ENCODE measurements at regions of chr9 and their contacts with region 1.

Region 1: GRCh38 chr9:101791938-101792337 is 53.5 kb upstream of the GRIN3A start:
- DNase-seq: peak; percentile 64
- H3K4me3 Mint-ChIP-seq: no peak overlapping the region
- H3K27ac Mint-ChIP-seq: no peak overlapping the region
- H3K4me1 Mint-ChIP-seq: no peaks in the 10 kb centered on the region
- H3K27me3 Mint-ChIP-seq: peaks cover 23% of the 10 kb centered on the region
- CTCF ChIP-seq: peak; percentile 64

Region 2: GRCh38 chr9:101970609-101971008 is 178.7 kb after region 1 on chr9:
- CTCF ChIA-PET with region 1: interaction called, 3 read pairs
- POLR2A ChIA-PET with region 1: no interaction called
- intact Hi-C with region 1: loop called (anchors 5 kb)
- DNase-seq: no peak
- H3K4me3 Mint-ChIP-seq: no peak overlapping the region
- H3K27ac Mint-ChIP-seq: no peak overlapping the region
- H3K4me1 Mint-ChIP-seq: no peaks in the 10 kb centered on the region
- H3K27me3 Mint-ChIP-seq: peaks cover 88% of the 10 kb centered on the region
- CTCF ChIP-seq: no peak

Measured in MCF 10A (cell line).